ENCODE measurements at regions of chr11 and their contacts with region 1.

Region 1: GRCh38 chr11:111777094-111778046 is 11.2 kb upstream of the PPP2R1B start:
- DNase-seq: no peak
- ATAC-seq: peak; percentile 87
- H3K4me3 ChIP-seq: no peak overlapping the region
- H3K27ac ChIP-seq: no peak overlapping the region
- H3K4me1 ChIP-seq: peaks cover 0 to 1% of the 10 kb centered on the region in 2 donors
- H3K27me3 ChIP-seq: no peaks in the 10 kb centered on the region

Region 2: DNA sequence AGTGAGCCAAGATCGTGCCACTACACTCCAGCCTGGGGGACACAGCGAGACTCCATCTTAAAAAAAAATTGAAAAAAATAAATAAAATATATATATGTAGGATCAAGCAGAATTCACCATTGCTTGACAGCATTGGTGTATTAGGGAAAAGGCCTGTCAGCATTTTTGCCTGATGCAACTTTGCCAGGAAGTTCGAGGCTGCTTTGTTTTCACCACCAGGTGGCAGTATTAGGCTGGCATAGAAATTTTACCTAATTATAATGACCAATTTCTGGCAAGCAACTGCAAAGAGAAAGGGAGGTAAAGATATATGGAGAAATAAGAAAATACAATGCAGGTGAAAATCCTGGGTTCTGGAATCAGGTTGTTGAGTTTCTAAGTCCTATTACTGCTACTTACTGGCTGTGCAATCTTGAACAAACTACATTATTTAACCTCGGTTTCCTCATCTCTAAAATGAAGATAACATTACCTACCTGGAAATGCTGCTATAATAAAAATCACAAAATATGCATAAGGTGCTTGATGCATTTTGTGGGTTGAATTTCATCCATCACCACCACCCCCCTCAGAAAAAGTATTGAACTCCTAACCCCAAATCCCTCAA is 212.2 kb before region 1 on chr11:
- intact Hi-C with region 1: loop called in 1 of 2 experiments (anchors 5 kb)
- DNase-seq: peak in 1 of 2 donors; percentile 56
- ATAC-seq: peak; percentile 53
- H3K4me3 ChIP-seq: no peak overlapping the region
- H3K27ac ChIP-seq: no peak overlapping the region
- H3K4me1 ChIP-seq: no peaks in the 10 kb centered on the region
- H3K27me3 ChIP-seq: no peaks in the 10 kb centered on the region

Region 3: GRCh38 chr11:111601979-111602864 is 175.1 kb before region 1 on chr11 and contains the start of gene SIK2:
- intact Hi-C with region 1: loop called (anchors 1 kb)
- DNase-seq: peak; percentile 96 to 97
- ATAC-seq: peak; percentile 97
- H3K4me3 ChIP-seq: peak within 1 kb of the TSS; percentile 77 to 89
- H3K27ac ChIP-seq: peak within 1 kb of the TSS in 1 of 2 donors; percentile 56
- H3K4me1 ChIP-seq: no peaks in the 10 kb centered on the region
- H3K27me3 ChIP-seq: no peaks in the 10 kb centered on the region
- total RNA-seq, gene SIK2: 13.0 to 21.9 TPM

Region 4: GRCh38 chr11:111735262-111736116 is 41.9 kb before region 1 on chr11:
- intact Hi-C with region 1: loop called in 1 of 2 experiments (anchors 5 kb)
- DNase-seq: peak; percentile 87 to 91
- ATAC-seq: peak; percentile 87
- H3K4me3 ChIP-seq: no peak overlapping the region
- H3K27ac ChIP-seq: peak overlapping the region; percentile 85 to 99
- H3K4me1 ChIP-seq: peaks cover 0 to 3% of the 10 kb centered on the region in 2 donors
- H3K27me3 ChIP-seq: no peaks in the 10 kb centered on the region

Region 5: DNA sequence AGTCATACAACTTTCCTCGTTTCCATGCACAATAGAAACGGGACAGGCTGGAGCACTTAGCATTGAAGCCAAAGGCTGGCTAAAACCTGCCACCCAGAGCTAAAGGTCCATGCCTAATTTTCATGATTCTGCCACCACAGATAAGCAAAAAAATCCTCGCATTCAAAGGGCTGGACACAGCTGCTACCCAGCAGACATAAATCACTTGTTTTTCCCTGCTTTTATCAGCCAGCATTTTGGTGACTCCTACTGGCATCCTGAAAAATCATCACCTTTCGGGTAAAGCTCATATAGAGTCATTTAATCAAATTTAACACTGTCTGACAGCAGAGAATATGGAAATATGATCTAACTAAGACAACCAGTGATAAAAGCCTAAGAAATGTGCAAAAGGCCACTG is 56.2 kb after region 1 on chr11:
- intact Hi-C with region 1: loop called in 1 of 2 experiments (anchors 5 kb)
- DNase-seq: no peak
- ATAC-seq: no peak
- H3K4me3 ChIP-seq: no peak overlapping the region
- H3K27ac ChIP-seq: no peak overlapping the region
- H3K4me1 ChIP-seq: no peaks in the 10 kb centered on the region
- H3K27me3 ChIP-seq: no peaks in the 10 kb centered on the region

Region 6: DNA sequence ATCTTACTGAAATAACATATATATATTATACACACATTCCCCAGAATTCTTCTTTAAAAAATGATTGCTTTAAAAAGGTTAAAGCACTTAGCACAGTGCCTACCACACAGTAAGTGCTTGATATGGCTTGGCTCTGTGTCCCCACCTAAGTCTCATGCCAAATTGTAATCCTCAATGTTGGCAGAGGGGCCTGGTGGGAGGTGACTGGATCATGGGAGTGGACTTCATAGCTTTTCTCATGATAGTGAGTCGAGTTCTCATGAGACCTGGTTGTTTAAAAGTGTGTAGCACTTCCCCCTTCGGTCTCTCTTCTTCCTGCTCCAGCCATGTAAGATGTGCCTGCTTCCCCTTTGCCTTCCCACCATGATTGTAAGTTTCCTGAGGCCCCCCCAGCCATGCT is 128.0 kb after region 1 on chr11:
- intact Hi-C with region 1: no loop called
- DNase-seq: no peak
- ATAC-seq: no peak
- H3K4me3 ChIP-seq: no peak overlapping the region
- H3K27ac ChIP-seq: no peak overlapping the region
- H3K4me1 ChIP-seq: no peaks in the 10 kb centered on the region
- H3K27me3 ChIP-seq: no peaks in the 10 kb centered on the region